ENCODE measurements at regions of chr18 and their contacts with region 1.

Region 1: GRCh38 chr18:30999186-30999585 is 43.4 kb downstream of the DSC3 start:
- DNase-seq: peak; percentile 36
- ATAC-seq: no peak
- H3K4me3 ChIP-seq: no peak overlapping the region
- H3K27ac ChIP-seq: no peak overlapping the region
- H3K4me1 ChIP-seq: no peaks in the 10 kb centered on the region
- H3K27me3 ChIP-seq: no peaks in the 10 kb centered on the region
- CTCF ChIP-seq: peak; percentile 55

Region 2: DNA sequence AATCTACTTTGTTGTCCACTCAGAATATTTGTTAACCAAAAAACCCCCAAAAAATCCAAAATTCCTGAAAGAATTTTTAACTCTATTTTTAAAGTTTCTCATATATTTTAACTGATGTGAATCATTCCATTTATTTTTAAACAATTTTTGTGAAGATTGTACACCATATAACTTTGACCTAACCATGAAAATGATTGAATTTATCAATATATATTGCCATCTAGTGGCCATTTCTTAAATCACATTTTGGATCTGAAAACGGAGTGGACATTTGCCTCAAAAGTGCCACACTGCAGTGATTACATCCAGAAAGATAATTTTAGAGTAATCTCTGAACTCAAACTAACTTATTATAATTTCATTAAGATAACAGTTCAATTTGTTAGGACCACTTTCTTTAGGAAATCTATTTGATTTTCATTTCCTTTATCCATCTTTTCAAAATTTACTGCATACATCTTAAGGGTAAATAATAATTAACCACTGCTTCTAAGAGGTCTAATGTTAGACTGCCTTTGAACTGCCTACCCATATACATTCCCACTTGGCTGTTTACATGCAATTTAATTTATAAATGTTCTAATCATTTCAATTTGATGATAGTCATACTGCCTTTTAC is 27.7 kb before region 1 on chr18:
- CTCF ChIA-PET with region 1: no interaction called
- POLR2A ChIA-PET with region 1: no interaction called
- intact Hi-C with region 1: loop called (anchors 1 kb)
- DNase-seq: peak; percentile 81
- ATAC-seq: no peak
- H3K4me3 ChIP-seq: no peak overlapping the region
- H3K27ac ChIP-seq: no peak overlapping the region
- H3K4me1 ChIP-seq: no peaks in the 10 kb centered on the region
- H3K27me3 ChIP-seq: no peaks in the 10 kb centered on the region
- CTCF ChIP-seq: peak; percentile 70